ENCODE measurements at regions of chr18 and their contacts with region 1.

Region 1: DNA sequence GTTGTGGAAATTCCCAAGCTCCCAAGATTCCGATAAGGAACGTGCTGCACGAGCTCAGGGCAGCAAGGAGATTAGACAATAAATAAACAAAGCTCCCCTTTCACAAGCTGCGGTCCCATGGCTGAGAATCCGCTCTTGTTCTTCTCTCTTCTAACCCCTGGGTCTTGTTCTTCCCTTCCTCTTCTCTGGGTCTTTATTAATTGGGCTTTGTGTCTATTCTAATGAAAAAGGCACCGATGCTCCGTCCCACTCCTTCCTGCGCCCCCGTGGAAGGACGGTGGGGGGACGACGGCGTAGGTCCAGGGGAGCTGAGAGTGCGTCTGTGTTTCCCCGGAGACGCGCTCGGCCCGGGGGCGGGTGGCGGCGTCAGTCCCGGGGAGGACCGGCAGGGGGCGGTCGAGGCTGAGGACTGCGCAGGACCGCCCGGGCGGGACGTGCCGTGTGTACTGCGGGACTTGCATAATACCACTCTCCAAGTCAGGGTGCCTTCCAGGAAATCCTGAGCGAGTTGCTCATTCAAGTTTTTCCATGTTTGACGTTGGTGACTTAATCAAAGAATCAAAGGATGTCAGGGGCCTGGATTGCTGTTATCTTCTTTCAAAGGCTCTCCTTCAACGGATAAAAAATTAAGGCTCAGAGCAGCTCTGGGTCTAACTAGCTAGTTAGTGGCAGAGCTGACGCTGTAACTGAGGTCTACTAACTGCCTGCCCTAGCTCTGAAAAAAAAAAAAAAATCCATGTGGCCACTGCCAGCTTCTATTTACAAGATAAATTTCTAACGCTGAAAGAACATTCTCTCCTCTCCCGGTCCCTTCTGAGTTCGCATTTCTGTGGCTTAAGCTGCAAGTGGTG is 321.4 kb downstream of the TGIF1 start:
- DNase-seq: peak; percentile 85
- H3K4me3 Mint-ChIP-seq: peak overlapping the region; percentile 38
- H3K27ac Mint-ChIP-seq: peak overlapping the region; percentile 15
- H3K4me1 Mint-ChIP-seq: peaks cover 11% of the 10 kb centered on the region
- H3K27me3 Mint-ChIP-seq: no peaks in the 10 kb centered on the region
- CTCF ChIP-seq: peak; percentile 93

Region 2: GRCh38 chr18:3631887-3632286 is 139.5 kb before region 1 on chr18:
- CTCF ChIA-PET with region 1: no interaction called
- POLR2A ChIA-PET with region 1: no interaction called
- intact Hi-C with region 1: no loop called
- DNase-seq: no peak
- H3K4me3 Mint-ChIP-seq: no peak overlapping the region
- H3K27ac Mint-ChIP-seq: no peak overlapping the region
- H3K4me1 Mint-ChIP-seq: no peaks in the 10 kb centered on the region
- H3K27me3 Mint-ChIP-seq: no peaks in the 10 kb centered on the region
- CTCF ChIP-seq: no peak

Region 3: GRCh38 chr18:3703732-3704176 is 67.6 kb before region 1 on chr18:
- CTCF ChIA-PET with region 1: interaction called, 9 read pairs
- POLR2A ChIA-PET with region 1: no interaction called
- intact Hi-C with region 1: loop called (anchors 1 kb)
- DNase-seq: peak; percentile 66
- H3K4me3 Mint-ChIP-seq: no peak overlapping the region
- H3K27ac Mint-ChIP-seq: no peak overlapping the region
- H3K4me1 Mint-ChIP-seq: peaks cover 9% of the 10 kb centered on the region
- H3K27me3 Mint-ChIP-seq: no peaks in the 10 kb centered on the region
- CTCF ChIP-seq: peak; percentile 61

Region 4: DNA sequence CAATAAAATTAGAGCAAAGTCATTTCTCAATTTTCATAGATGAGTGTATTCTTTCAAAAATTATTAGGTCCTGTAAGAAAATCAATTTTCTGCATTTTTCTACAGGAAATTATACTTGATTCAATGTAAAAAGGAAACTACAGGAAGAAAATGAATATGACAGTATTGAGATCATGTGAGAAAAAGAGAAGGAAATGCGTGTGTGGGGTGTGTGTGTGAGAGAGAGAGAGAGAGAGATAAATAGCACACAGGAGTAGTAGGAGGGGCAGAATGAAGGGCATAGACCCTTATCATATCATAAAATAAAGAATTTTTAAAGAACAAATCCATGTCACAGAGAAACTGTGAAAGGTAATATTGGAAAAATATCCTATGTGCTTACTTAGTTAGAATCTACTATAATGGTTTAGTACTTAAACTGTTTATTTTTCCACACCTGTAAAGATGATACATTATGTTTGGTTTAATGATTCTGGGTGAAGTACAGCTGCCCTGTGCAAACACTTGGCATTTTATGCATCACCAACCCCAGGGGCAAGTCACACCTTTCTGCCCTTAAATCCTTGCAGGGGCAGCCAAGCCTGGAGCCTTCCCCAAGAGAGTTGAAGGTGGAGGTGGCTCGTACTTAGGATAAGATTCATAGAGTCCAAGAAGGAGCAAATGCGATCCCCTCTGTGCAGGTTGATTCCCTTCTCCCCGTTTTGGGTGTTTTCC is 45.0 kb before region 1 on chr18:
- CTCF ChIA-PET with region 1: no interaction called
- POLR2A ChIA-PET with region 1: no interaction called
- intact Hi-C with region 1: no loop called
- DNase-seq: no peak
- H3K4me3 Mint-ChIP-seq: no peak overlapping the region
- H3K27ac Mint-ChIP-seq: no peak overlapping the region
- H3K4me1 Mint-ChIP-seq: no peaks in the 10 kb centered on the region
- H3K27me3 Mint-ChIP-seq: peaks cover 28% of the 10 kb centered on the region
- CTCF ChIP-seq: no peak

Region 5: GRCh38 chr18:3782901-3783300 is 11.6 kb after region 1 on chr18:
- CTCF ChIA-PET with region 1: interaction called, 11 read pairs
- POLR2A ChIA-PET with region 1: interaction called, 3 read pairs
- intact Hi-C with region 1: no loop called
- DNase-seq: no peak
- H3K4me3 Mint-ChIP-seq: no peak overlapping the region
- H3K27ac Mint-ChIP-seq: no peak overlapping the region
- H3K4me1 Mint-ChIP-seq: no peaks in the 10 kb centered on the region
- H3K27me3 Mint-ChIP-seq: no peaks in the 10 kb centered on the region
- CTCF ChIP-seq: no peak

Region 6: GRCh38 chr18:3827236-3827875 is 56.0 kb after region 1 on chr18:
- CTCF ChIA-PET with region 1: interaction called, 12 read pairs
- POLR2A ChIA-PET with region 1: no interaction called
- intact Hi-C with region 1: no loop called
- DNase-seq: no peak
- H3K4me3 Mint-ChIP-seq: no peak overlapping the region
- H3K27ac Mint-ChIP-seq: no peak overlapping the region
- H3K4me1 Mint-ChIP-seq: peaks cover 14% of the 10 kb centered on the region
- H3K27me3 Mint-ChIP-seq: no peaks in the 10 kb centered on the region
- CTCF ChIP-seq: no peak

Region 7: GRCh38 chr18:3869848-3870247 is 98.5 kb after region 1 on chr18:
- CTCF ChIA-PET with region 1: interaction called, 199 read pairs
- POLR2A ChIA-PET with region 1: interaction called, 9 read pairs
- intact Hi-C with region 1: loop called (anchors 1 kb)
- DNase-seq: peak; percentile 68
- H3K4me3 Mint-ChIP-seq: no peak overlapping the region
- H3K27ac Mint-ChIP-seq: no peak overlapping the region
- H3K4me1 Mint-ChIP-seq: no peaks in the 10 kb centered on the region
- H3K27me3 Mint-ChIP-seq: peaks cover 21% of the 10 kb centered on the region
- CTCF ChIP-seq: peak; percentile 65

Region 8: GRCh38 chr18:3995476-3996102 is 224.2 kb after region 1 on chr18:
- CTCF ChIA-PET with region 1: interaction called, 77 read pairs
- POLR2A ChIA-PET with region 1: interaction called, 9 read pairs
- intact Hi-C with region 1: loop called (anchors 1 kb)
- DNase-seq: peak; percentile 77
- H3K4me3 Mint-ChIP-seq: no peak overlapping the region
- H3K27ac Mint-ChIP-seq: no peak overlapping the region
- H3K4me1 Mint-ChIP-seq: no peaks in the 10 kb centered on the region
- H3K27me3 Mint-ChIP-seq: no peaks in the 10 kb centered on the region
- CTCF ChIP-seq: peak; percentile 73